Activated CD4-positive, alpha-beta T cell treated with anti-CD3 and anti-CD28 coated beads, Interleukin-2, amount 10 ng/mL, durations not matched to agents 24 days and 14 days (primary cell): ENCODE measurements at regions of chr4 and their contacts with region 1.

Region 1: DNA sequence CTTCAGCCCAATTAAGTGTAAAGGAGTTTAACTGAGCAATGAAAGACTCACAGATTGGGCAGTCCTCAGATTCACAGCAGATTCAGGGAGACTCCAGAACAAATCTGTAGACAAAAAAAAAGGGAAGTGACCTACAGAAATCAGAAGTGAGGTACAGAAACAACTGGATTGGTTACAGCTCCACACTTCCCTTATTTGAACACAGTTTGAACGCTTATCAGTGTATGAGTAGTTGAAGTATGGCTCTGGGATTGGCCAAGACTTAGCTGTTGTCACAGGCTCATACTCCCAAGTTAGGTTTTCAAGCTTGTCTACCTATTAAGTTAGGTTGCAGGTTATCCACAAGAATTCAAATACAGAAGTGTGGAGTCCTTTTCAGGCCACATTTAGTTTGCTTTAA is 112.4 kb upstream of the ELOVL6 start:
- DNase-seq: no peak
- H3K4me3 Mint-ChIP-seq: no peak overlapping the region
- H3K27ac Mint-ChIP-seq: no peak overlapping the region
- H3K4me1 Mint-ChIP-seq: no peaks in the 10 kb centered on the region
- H3K27me3 Mint-ChIP-seq: peaks cover 23% of the 10 kb centered on the region

Region 2: GRCh38 chr4:110510955-110511544 is 200.3 kb after region 1 on chr4:
- intact Hi-C with region 1: loop called (anchors 2 kb)
- DNase-seq: no peak
- H3K4me3 Mint-ChIP-seq: no peak overlapping the region
- H3K27ac Mint-ChIP-seq: no peak overlapping the region
- H3K4me1 Mint-ChIP-seq: peaks cover 7% of the 10 kb centered on the region
- H3K27me3 Mint-ChIP-seq: peaks cover 6% of the 10 kb centered on the region

Region 3: GRCh38 chr4:110840221-110840654 is 529.4 kb after region 1 on chr4:
- intact Hi-C with region 1: no loop called
- DNase-seq: no peak
- H3K4me3 Mint-ChIP-seq: no peak overlapping the region
- H3K27ac Mint-ChIP-seq: no peak overlapping the region
- H3K4me1 Mint-ChIP-seq: no peaks in the 10 kb centered on the region
- H3K27me3 Mint-ChIP-seq: no peaks in the 10 kb centered on the region